ENCODE measurements at regions of chr9 and their contacts with region 1.

Region 1: GRCh38 chr9:113511856-113512761 is 48.6 kb downstream of the RGS3 start:
- DNase-seq: peak; percentile 89
- H3K4me3 Mint-ChIP-seq: peak overlapping the region; percentile 52
- H3K27ac Mint-ChIP-seq: peak overlapping the region; percentile 91
- H3K4me1 Mint-ChIP-seq: peaks cover 52% of the 10 kb centered on the region
- H3K27me3 Mint-ChIP-seq: peaks cover 2% of the 10 kb centered on the region

Region 2: DNA sequence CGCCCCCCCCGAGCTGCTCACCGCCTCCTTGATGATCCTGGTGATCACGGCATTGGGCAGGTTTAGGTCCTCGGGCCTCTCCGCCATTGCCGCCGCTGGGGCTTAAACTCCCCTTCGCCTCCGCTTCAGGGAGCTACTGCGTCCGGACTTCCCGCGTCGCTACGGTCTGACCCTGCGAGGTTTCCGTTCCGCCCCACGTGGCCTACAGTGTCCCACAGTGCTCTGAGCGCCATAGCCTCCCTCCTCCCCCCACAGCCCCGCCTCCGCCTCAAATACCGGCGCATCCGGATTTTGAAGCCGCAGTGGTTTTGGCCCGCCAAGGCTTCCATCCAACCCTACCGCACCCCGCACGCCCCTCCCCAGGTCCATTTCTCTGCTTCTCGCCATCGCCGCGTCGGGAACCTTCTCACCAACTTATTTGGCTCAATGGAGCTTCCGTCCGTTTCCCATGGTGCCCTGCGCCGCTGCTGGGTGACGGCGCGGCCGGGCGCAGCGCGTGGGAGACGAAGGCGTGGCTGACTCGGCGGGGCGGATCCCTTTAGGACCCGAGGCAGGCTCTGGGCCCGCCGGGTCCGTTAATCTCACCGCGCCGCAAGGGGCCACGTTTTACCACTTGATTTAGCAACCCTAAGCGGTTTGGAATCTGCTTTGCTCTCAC is 101.8 kb before region 1 on chr9 and contains the starts of genes C9orf43 and POLE3:
- CTCF ChIA-PET with region 1: no interaction called
- POLR2A ChIA-PET with region 1: interaction called, 12 read pairs
- intact Hi-C with region 1: loop called (anchors 1 kb)
- DNase-seq: peak; percentile 97
- H3K4me3 Mint-ChIP-seq: peak within 1 kb of the TSS; percentile 98
- H3K27ac Mint-ChIP-seq: peak within 1 kb of the TSS; percentile 100
- H3K4me1 Mint-ChIP-seq: peaks cover 36% of the 10 kb centered on the region
- H3K27me3 Mint-ChIP-seq: no peaks in the 10 kb centered on the region
- total RNA-seq, gene C9orf43: 0.65 to 0.81 TPM
- total RNA-seq, gene POLE3: 44.3 to 45.0 TPM

Region 3: DNA sequence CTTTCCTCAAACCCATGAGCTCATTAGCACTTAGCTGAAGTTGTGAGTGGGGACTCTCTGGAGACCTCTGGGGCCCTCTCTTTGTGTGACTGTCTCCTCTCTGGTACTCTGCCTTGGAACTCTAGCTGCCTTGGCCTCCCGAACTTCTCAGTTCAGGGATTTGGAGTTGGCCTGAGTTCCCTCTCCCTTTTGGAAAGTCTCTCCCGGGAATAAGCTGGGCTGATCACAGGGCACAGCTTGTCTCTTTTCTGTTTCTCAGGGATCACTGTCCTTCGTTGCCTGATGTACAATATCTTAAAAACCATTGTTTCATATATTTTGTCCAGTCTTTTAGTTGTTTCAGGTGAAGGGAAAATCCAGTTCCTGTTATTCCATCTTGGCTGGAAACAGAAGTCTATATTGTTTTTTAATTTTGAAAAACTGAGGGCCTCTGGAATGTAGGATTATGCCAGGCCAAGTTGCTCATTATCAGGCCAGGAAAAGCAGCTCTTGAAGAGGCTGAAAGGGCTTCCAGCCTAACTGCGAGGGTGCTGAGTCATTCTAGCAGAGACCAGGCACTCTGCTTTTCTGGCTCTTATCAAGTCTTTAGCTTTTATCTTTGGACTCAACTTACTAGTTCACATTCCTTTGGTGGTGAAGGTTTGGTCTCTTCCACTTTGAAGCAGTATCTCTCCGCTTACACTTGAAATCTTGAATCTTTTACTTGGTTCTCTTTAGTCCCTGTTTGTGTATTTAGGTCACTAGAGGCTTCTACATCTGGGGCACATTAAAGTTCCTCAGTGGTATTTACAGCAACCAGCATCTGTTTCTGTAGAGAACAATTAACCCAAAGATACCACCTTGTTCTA is 57.0 kb before region 1 on chr9:
- CTCF ChIA-PET with region 1: no interaction called
- POLR2A ChIA-PET with region 1: no interaction called
- intact Hi-C with region 1: loop called (anchors 5 kb)
- DNase-seq: peak; percentile 25
- H3K4me3 Mint-ChIP-seq: no peak overlapping the region
- H3K27ac Mint-ChIP-seq: no peak overlapping the region
- H3K4me1 Mint-ChIP-seq: peaks cover 4% of the 10 kb centered on the region
- H3K27me3 Mint-ChIP-seq: no peaks in the 10 kb centered on the region

Region 4: DNA sequence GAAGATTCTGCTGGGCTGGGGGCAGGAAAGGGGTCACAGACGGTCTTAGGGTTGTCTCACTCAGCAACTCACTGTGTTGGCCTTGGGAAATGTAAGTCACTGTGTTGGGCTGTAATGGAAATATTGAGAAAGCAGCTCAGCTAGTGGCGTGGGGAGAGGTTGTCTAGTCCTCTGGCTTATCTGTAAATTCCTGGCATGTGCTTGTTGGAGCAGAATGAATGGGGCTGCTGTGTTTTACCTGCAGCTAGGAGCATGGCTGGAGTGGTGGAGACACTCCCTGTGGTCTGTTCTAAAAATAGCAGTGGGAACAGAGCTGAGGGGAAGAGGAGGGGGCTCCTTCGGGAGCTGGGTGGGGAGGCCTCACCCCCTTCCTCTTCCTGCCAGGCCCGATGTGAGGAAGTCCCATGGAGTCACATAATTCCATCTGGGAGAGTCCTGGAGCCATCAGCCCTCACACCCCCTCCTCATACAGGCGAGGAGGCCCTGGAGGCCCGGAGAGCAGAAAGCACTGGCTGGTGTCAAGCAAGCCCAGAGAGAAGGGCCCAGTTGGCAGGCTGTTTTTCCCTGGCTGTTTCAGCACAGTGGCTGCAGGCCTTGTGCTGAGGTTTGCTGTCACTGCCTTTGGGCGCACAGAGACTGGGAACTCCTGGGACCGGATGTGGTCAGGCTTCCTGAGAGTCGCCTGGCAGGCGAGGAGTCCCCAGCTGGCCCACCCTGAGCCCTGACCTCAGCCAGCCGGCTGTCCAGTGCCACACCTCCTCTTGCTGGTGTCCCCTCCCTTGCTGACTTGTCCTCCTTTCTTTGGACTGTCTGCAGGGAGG is 36.3 kb after region 1 on chr9:
- CTCF ChIA-PET with region 1: interaction called, 3 read pairs
- POLR2A ChIA-PET with region 1: no interaction called
- intact Hi-C with region 1: loop called (anchors 1 kb)
- DNase-seq: peak; percentile 53
- H3K4me3 Mint-ChIP-seq: no peak overlapping the region
- H3K27ac Mint-ChIP-seq: peak overlapping the region; percentile 75
- H3K4me1 Mint-ChIP-seq: peaks cover 26% of the 10 kb centered on the region
- H3K27me3 Mint-ChIP-seq: no peaks in the 10 kb centered on the region

Region 5: GRCh38 chr9:113622600-113623400 is 110.7 kb after region 1 on chr9:
- CTCF ChIA-PET with region 1: interaction called, 3 read pairs
- POLR2A ChIA-PET with region 1: interaction called, 8 read pairs
- intact Hi-C with region 1: loop called (anchors 1 kb)
- DNase-seq: peak; percentile 92
- H3K4me3 Mint-ChIP-seq: peak overlapping the region; percentile 63
- H3K27ac Mint-ChIP-seq: peak overlapping the region; percentile 99
- H3K4me1 Mint-ChIP-seq: peaks cover 54% of the 10 kb centered on the region
- H3K27me3 Mint-ChIP-seq: no peaks in the 10 kb centered on the region

Region 6: GRCh38 chr9:113636165-113636564 is 124.1 kb after region 1 on chr9:
- CTCF ChIA-PET with region 1: no interaction called
- POLR2A ChIA-PET with region 1: no interaction called
- intact Hi-C with region 1: no loop called
- DNase-seq: no peak
- H3K4me3 Mint-ChIP-seq: no peak overlapping the region
- H3K27ac Mint-ChIP-seq: no peak overlapping the region
- H3K4me1 Mint-ChIP-seq: peaks cover 6% of the 10 kb centered on the region
- H3K27me3 Mint-ChIP-seq: peaks cover 6% of the 10 kb centered on the region

Measured in activated CD4-positive, alpha-beta memory T cell treated with anti-CD3 and anti-CD28 coated beads for 36 hours (primary cell).